Activated CD4-positive, alpha-beta T cell treated with anti-CD3 and anti-CD28 coated beads for 36 hours (primary cell): ENCODE measurements at regions of chr6 and their contacts with region 1.

Region 1: GRCh38 chr6:109382576-109383437 is 540 bp upstream of the CD164 start:
- DNase-seq: peak; percentile 95
- ATAC-seq: peak; percentile 67
- H3K4me3 Mint-ChIP-seq: peak overlapping the region; percentile 98
- H3K27ac Mint-ChIP-seq: peak overlapping the region; percentile 99
- H3K4me1 Mint-ChIP-seq: peaks cover 25% of the 10 kb centered on the region
- H3K27me3 Mint-ChIP-seq: no peaks in the 10 kb centered on the region

Region 2: GRCh38 chr6:108074359-108075144 is 1308.3 kb before region 1 on chr6 and contains the start of gene OSTM1:
- CTCF ChIA-PET with region 1: no interaction called
- POLR2A ChIA-PET with region 1: no interaction called
- intact Hi-C with region 1: loop called in 1 of 2 experiments (anchors 2 kb)
- DNase-seq: peak; percentile 96
- ATAC-seq: peak; percentile 98
- H3K4me3 Mint-ChIP-seq: peak within 1 kb of the TSS; percentile 76
- H3K27ac Mint-ChIP-seq: peak within 1 kb of the TSS; percentile 80
- H3K4me1 Mint-ChIP-seq: peaks cover 19% of the 10 kb centered on the region
- H3K27me3 Mint-ChIP-seq: peaks cover 3% of the 10 kb centered on the region
- total RNA-seq, gene OSTM1: 5.5 to 7.3 TPM

Region 3: GRCh38 chr6:109009236-109009961 is 373.4 kb before region 1 on chr6:
- CTCF ChIA-PET with region 1: interaction called, 3 read pairs
- POLR2A ChIA-PET with region 1: no interaction called
- intact Hi-C with region 1: loop called in 1 of 2 experiments (anchors 2 kb)
- DNase-seq: peak; percentile 95
- ATAC-seq: peak; percentile 89
- H3K4me3 Mint-ChIP-seq: peak overlapping the region; percentile 94
- H3K27ac Mint-ChIP-seq: peak overlapping the region; percentile 98
- H3K4me1 Mint-ChIP-seq: peaks cover 60% of the 10 kb centered on the region
- H3K27me3 Mint-ChIP-seq: no peaks in the 10 kb centered on the region

Region 4: GRCh38 chr6:109130065-109130464 is 252.7 kb before region 1 on chr6:
- CTCF ChIA-PET with region 1: no interaction called
- POLR2A ChIA-PET with region 1: no interaction called
- intact Hi-C with region 1: no loop called
- DNase-seq: no peak
- ATAC-seq: no peak
- H3K4me3 Mint-ChIP-seq: no peak overlapping the region
- H3K27ac Mint-ChIP-seq: no peak overlapping the region
- H3K4me1 Mint-ChIP-seq: peaks cover 3% of the 10 kb centered on the region
- H3K27me3 Mint-ChIP-seq: no peaks in the 10 kb centered on the region

Region 5: GRCh38 chr6:109202409-109203284 is 180.2 kb before region 1 on chr6:
- CTCF ChIA-PET with region 1: interaction called, 7 read pairs
- POLR2A ChIA-PET with region 1: no interaction called
- intact Hi-C with region 1: loop called (anchors 1 kb)
- DNase-seq: peak; percentile 59
- ATAC-seq: peak; percentile 95
- H3K4me3 Mint-ChIP-seq: no peak overlapping the region
- H3K27ac Mint-ChIP-seq: peak overlapping the region; percentile 59
- H3K4me1 Mint-ChIP-seq: peaks cover 14% of the 10 kb centered on the region
- H3K27me3 Mint-ChIP-seq: no peaks in the 10 kb centered on the region

Region 6: DNA sequence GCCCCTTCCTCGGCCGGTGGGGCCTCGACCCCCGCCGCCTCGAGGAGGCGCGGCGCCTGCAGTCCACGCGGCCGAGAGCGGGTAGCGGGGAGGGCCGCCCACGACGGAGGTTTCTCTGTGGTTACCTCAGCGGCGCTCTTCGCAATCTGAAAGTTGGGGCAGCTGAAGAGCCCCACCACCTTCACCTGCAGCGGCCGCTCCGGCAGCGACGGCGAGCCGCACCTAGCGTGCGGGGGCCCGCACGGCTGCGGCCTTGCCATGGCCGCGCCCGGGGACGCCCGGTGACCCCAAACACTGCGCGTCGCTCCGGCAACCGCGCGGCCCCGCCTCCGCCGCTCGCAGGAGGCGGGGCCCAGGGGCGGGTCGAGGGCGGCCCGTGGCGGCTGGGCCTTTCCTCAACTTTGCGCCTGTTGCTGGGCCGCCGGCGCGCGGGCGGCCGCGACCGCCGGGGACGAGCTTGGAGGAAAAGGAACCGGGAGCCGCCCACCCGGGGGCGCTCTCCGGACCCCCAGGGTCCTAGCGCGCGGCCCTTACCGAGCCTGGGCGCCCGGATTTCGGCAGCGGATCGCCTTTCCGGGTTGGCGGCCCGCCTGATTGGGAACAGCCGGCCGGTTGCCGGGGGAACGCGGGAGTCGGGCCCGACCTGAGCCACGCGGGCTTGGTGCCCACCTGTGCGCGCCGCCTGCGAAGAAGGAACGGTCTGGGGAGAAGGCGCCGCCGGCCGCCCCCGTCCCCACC is 57.7 kb after region 1 on chr6 and contains the starts of genes PPIL6 and SMPD2:
- CTCF ChIA-PET with region 1: interaction called, 12 read pairs
- POLR2A ChIA-PET with region 1: interaction called, 7 read pairs
- intact Hi-C with region 1: loop called (anchors 1 kb)
- DNase-seq: peak; percentile 86
- ATAC-seq: peak; percentile 85
- H3K4me3 Mint-ChIP-seq: peak within 1 kb of the TSS; percentile 89
- H3K27ac Mint-ChIP-seq: peak within 1 kb of the TSS; percentile 85
- H3K4me1 Mint-ChIP-seq: peaks cover 18% of the 10 kb centered on the region
- H3K27me3 Mint-ChIP-seq: no peaks in the 10 kb centered on the region
- total RNA-seq, gene PPIL6: 0.09 TPM in 1 of 2 experiments, not detected in the other
- total RNA-seq, gene SMPD2: 7.5 to 9.5 TPM

Region 7: DNA sequence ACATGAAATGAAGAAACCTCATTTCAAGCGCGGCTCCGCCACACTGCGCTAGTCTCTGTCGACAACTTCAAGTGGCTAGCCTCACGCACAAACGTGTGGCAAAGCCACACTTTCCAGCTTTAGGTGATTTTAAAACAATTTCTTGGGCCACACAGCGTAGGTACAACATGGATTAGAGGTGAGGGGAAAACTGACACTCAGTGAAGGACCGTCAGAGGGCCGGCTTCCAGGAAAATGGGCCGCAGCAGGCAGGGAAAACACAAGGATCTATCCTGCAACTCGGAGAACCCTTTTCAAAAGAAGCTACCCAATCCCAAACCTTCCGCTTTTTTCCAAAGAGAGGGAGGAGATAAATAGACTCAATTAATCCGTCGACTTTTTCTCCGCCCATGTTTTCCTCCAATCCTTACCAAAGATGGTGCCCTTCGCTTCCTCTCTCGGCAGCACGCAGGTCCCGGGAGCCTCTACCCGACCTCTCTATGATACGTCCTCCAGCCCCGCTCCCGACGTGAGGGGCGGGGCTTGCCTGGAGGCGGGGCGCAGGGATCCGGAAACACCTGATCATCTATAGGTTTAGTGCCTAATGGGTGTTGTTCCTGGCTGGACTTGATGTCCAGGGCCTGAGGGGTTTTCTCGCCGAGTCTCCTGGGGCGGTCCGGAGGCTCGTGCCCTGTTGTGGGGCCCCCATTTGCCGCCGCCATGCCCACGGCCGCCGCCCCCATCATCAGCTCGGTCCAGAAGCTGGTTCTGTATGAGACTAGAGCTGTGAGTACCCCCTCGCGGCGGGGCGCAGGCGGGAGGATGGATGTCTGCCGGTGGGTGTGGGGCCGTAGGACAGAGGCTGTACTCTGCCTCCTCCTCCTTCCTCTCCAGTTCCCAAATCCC is 308.2 kb after region 1 on chr6 and contains the starts of genes AK9 and FIG4:
- CTCF ChIA-PET with region 1: no interaction called
- POLR2A ChIA-PET with region 1: no interaction called
- intact Hi-C with region 1: loop called (anchors 1 kb)
- DNase-seq: peak; percentile 95
- ATAC-seq: peak; percentile 94
- H3K4me3 Mint-ChIP-seq: peak within 1 kb of the TSS; percentile 94
- H3K27ac Mint-ChIP-seq: peak within 1 kb of the TSS; percentile 92
- H3K4me1 Mint-ChIP-seq: peaks cover 38% of the 10 kb centered on the region
- H3K27me3 Mint-ChIP-seq: no peaks in the 10 kb centered on the region
- total RNA-seq, gene AK9: 3.5 to 5.2 TPM
- total RNA-seq, gene FIG4: 14.4 to 17.5 TPM

Region 8: DNA sequence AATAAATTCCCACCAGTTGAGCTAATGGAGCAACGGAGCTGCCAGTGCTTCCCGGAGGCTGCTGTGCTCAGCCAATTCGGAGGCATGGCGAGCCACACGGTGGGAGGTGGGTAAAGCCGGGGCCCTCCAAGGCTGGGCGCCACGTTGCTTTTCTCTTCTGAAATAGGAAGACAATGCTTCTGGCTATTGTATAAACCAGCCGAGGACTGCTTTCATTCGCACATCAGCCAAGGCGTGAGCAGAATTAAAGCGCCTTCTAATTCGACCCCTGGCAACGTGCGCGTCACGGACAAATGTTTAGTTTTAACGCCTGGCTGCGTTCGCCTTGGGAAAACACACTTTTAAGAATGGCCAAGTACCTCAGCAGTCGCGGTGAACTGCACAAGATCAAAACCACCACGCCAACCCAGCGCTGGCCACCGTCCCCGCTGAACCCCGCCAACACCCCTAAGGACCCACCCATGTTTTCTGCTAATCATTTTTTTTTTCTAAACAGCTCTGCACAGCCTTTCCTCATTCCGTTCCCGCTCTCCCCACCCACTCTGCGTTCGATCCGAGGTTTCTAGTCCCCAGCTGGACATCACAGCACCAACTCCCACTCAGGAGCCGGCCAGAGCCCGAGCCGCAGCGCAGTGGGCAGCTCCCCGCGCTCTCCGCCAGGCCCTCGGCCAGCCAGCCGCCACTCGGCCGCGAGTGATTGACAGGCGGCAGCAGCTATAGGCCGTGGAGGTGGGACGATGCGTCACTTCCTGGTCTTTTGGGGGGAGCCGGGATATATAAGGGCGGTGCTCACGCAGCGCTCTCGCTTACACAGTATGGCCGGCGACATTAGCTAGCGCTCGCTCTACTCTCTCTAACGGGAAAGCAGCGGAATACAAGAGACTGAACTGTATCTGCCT is 1491.4 kb after region 1 on chr6 and contains the start of gene AMD1:
- CTCF ChIA-PET with region 1: no interaction called
- POLR2A ChIA-PET with region 1: no interaction called
- intact Hi-C with region 1: loop called in 1 of 2 experiments (anchors 2 kb)
- DNase-seq: peak; percentile 97
- ATAC-seq: peak; percentile 79
- H3K4me3 Mint-ChIP-seq: peak within 1 kb of the TSS; percentile 93
- H3K27ac Mint-ChIP-seq: peak within 1 kb of the TSS; percentile 98
- H3K4me1 Mint-ChIP-seq: peaks cover 25% of the 10 kb centered on the region
- H3K27me3 Mint-ChIP-seq: no peaks in the 10 kb centered on the region
- total RNA-seq, gene AMD1: 90.5 to 127 TPM